Sigmoid colon (tissue), 7 donors: ENCODE measurements at regions of chr7 and their contacts with region 1.

Region 1: GRCh38 chr7:136142583-136142982 is 165.4 kb upstream of the MTPN start:
- DNase-seq: no peak
- H3K4me3 ChIP-seq: no peak overlapping the region
- H3K27ac ChIP-seq: peak overlapping the region in 3 of 4 donors; percentile 14 to 64 (median 60)
- H3K4me1 ChIP-seq: peaks cover 2 to 66% (median 26%) of the 10 kb centered on the region in 4 donors
- H3K27me3 ChIP-seq: no peaks in the 10 kb centered on the region
- CTCF ChIP-seq: no peak
- EP300 ChIP-seq: peak in 3 of 4 donors; percentile 28 to 78 (median 67)
- POLR2A ChIP-seq: no peak

Region 2: DNA sequence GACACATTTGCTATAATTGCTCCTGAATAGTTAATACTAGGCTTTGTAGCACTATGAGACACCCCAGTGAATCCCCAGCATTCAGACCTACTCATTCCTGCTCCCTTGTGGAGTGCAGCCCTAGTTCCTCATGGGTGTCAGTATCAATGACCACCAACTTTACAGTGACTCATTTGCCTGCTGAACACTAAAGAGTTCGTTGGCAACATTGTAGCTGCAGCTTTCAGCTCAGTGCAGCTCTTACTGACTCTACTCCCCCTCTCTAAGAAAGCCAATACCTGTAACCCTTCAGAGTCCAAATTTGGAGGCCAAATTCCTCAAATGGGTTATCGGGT is 38.3 kb before region 1 on chr7:
- intact Hi-C with region 1: no loop called
- DNase-seq: no peak
- H3K4me3 ChIP-seq: no peak overlapping the region
- H3K27ac ChIP-seq: no peak overlapping the region
- H3K4me1 ChIP-seq: no peaks in the 10 kb centered on the region
- H3K27me3 ChIP-seq: no peaks in the 10 kb centered on the region
- CTCF ChIP-seq: no peak
- EP300 ChIP-seq: no peak
- POLR2A ChIP-seq: no peak

Region 3: GRCh38 chr7:136266457-136266856 is 123.9 kb after region 1 on chr7:
- intact Hi-C with region 1: loop called (anchors 5 kb)
- DNase-seq: peak; percentile 88
- H3K4me3 ChIP-seq: no peak overlapping the region
- H3K27ac ChIP-seq: peak overlapping the region in 3 of 4 donors; percentile 30 to 64 (median 54)
- H3K4me1 ChIP-seq: peaks cover 0 to 11% (median 2%) of the 10 kb centered on the region in 4 donors
- H3K27me3 ChIP-seq: no peaks in the 10 kb centered on the region
- CTCF ChIP-seq: no peak
- EP300 ChIP-seq: peak in 2 of 4 donors; percentile 9 to 64
- POLR2A ChIP-seq: no peak

Region 4: DNA sequence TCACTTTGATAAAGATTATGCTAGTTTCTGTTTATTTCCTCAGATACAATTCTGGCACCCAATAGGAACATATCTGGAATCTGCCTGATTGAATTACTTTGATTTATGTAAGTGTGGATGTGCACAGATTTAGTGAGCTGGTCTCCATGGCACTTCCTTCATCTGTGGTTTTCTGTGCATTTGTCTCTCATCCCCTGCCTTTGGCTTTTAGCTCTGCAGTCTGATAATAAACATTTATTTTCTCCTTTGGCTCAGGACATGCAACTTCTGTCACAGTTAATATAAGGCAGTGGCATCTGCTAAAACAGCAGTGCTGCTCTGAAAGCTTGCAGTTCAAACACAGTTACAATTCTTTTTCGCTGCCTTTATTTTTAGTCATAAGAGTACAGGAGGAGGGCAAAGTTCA is 452.2 kb after region 1 on chr7:
- intact Hi-C with region 1: loop called (anchors 10 kb)
- DNase-seq: no peak
- H3K4me3 ChIP-seq: no peak overlapping the region
- H3K27ac ChIP-seq: peak overlapping the region in 3 of 4 donors; percentile 60 to 76 (median 73)
- H3K4me1 ChIP-seq: peaks cover 0 to 48% (median 10%) of the 10 kb centered on the region in 4 donors
- H3K27me3 ChIP-seq: no peaks in the 10 kb centered on the region
- CTCF ChIP-seq: peak in 2 of 4 experiments; percentile 9 to 18
- EP300 ChIP-seq: peak in 3 of 4 donors; percentile 58 to 72 (median 61)
- POLR2A ChIP-seq: no peak

Region 5: DNA sequence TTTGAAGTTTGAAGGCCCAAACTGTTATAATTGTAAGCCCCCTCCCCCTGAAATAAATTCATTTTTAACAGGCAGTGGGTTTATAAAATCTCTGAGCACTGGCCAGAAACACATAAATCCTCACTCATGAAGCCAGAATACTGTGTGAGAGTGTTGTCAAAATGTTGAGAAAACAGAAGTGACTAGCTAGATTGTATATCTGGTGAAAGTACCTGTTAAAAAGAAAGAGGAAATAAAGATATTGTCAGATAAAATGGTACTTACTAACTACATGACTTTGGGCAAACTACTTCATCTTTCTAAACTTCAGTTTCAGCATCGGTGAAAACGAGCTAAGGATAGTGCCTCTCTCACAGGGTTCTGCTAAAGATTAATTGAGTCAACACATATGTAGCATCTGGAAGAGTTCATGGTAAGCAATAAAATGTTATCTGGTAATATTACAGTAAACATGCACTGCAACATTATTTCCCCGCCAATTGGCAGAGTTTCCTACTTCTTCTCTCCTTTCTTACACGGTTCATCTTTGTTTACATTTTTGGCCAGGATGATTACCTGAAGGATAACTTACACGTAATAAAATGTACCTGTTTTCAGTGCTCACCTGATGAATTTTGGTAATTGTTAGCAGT is 523.4 kb after region 1 on chr7:
- intact Hi-C with region 1: no loop called
- DNase-seq: no peak
- H3K4me3 ChIP-seq: no peak overlapping the region
- H3K27ac ChIP-seq: peak overlapping the region in 1 of 4 donors; percentile 24
- H3K4me1 ChIP-seq: peaks cover 0 to 13% (median 3%) of the 10 kb centered on the region in 4 donors
- H3K27me3 ChIP-seq: no peaks in the 10 kb centered on the region
- CTCF ChIP-seq: no peak
- EP300 ChIP-seq: no peak
- POLR2A ChIP-seq: no peak